ENCODE measurements at regions of chr7 and their contacts with region 1.

Region 1: DNA sequence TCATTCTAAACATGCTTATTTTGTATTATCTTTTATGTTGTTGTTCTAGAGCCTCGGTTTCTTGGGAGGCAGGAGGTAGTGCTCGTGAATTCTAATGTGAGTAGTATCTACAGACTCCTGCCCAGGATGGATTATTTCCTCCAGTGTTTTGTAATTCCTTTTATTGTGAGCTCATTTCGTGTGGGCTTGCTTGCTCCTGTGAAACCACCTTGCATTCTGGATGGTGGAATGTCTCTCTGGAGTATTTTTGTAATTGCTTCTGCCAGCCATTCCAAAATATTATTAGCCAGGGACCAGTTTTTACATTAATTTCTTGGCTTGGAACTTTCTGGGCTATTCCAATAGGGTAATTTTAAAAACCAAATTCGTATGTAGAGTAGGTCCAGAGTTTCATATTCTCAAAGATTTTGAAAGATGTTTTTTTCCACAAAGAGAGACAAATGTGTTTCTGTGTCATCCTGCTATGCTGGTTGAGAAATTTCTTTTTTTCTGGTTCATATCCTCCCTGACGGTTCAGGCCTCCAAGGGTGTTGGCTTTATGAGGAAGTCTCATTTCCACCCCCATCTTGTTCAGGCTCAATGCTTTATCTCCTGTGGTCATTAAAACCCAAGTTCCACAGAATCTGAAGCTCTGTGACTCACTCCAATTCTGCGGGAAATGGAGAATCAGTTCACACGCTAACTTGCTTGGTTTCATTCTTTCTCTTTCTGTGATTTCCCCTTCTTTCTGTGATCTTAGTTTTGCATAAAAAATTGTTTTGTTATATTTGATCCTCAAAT is 41.7 kb upstream of the CALD1 start:
- DNase-seq: peak; percentile 65
- H3K4me3 Mint-ChIP-seq: no peak overlapping the region
- H3K27ac Mint-ChIP-seq: peak overlapping the region; percentile 88
- H3K4me1 Mint-ChIP-seq: peaks cover 41% of the 10 kb centered on the region
- H3K27me3 Mint-ChIP-seq: no peaks in the 10 kb centered on the region

Region 2: GRCh38 chr7:134632937-134633540 is 104.7 kb before region 1 on chr7:
- CTCF ChIA-PET with region 1: interaction called, 3 read pairs
- POLR2A ChIA-PET with region 1: interaction called, 3 read pairs
- intact Hi-C with region 1: loop called (anchors 2 kb)
- DNase-seq: peak; percentile 29
- H3K4me3 Mint-ChIP-seq: no peak overlapping the region
- H3K27ac Mint-ChIP-seq: no peak overlapping the region
- H3K4me1 Mint-ChIP-seq: peaks cover 23% of the 10 kb centered on the region
- H3K27me3 Mint-ChIP-seq: peaks cover 13% of the 10 kb centered on the region

Region 3: GRCh38 chr7:134710859-134711624 is 26.7 kb before region 1 on chr7:
- CTCF ChIA-PET with region 1: no interaction called
- POLR2A ChIA-PET with region 1: no interaction called
- intact Hi-C with region 1: loop called (anchors 1 kb)
- DNase-seq: peak; percentile 78
- H3K4me3 Mint-ChIP-seq: peak overlapping the region; percentile 76
- H3K27ac Mint-ChIP-seq: peak overlapping the region; percentile 97
- H3K4me1 Mint-ChIP-seq: peaks cover 30% of the 10 kb centered on the region
- H3K27me3 Mint-ChIP-seq: no peaks in the 10 kb centered on the region

Region 4: DNA sequence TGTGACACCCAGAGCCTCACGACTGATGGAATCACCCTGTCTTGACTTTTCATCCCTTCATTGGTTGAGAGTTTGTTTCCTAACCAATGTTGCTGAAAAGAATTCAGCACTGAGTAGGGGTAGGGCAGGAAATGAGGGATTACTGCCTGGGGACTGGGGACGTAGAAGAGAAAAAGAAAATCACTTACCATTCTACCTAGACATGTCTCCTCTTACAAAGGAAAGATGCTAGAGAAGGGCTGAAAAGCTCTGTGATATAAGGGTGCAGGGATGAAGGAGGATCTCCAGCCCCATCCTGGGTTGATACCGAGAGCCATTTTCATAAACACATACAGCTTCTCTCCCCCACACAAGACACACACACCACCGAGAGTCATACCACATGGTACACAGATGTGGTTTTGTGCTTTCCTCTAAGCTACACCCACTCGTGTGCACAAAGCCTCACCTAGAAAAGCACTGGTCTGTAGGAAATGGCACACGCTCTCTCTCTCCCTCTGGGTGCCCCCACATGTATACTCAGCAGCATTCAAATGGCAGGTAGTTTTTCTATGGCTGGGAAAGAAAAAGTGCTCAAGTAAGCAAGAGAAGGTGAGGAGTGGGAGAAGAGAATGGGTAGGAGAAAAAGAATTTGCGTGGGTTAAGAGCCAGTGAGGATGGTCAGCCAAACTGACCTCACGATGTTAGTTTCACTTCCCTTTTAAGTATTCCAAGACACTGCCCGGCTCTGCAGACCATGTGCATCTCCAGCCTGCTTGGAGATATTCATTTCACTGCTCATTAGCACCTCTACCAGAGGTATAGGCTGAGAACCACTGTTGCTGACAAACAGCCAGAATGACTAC is 127.5 kb after region 1 on chr7:
- CTCF ChIA-PET with region 1: no interaction called
- POLR2A ChIA-PET with region 1: no interaction called
- intact Hi-C with region 1: loop called (anchors 2 kb)
- DNase-seq: peak; percentile 56
- H3K4me3 Mint-ChIP-seq: peak overlapping the region; percentile 50
- H3K27ac Mint-ChIP-seq: peak overlapping the region; percentile 61
- H3K4me1 Mint-ChIP-seq: peaks cover 18% of the 10 kb centered on the region
- H3K27me3 Mint-ChIP-seq: no peaks in the 10 kb centered on the region